Activated CD8-positive, alpha-beta T cell treated with anti-CD3 and anti-CD28 coated beads for 36 hours (primary cell): ENCODE measurements at regions of chr20 and their contacts with region 1.

Region 1: GRCh38 chr20:53611449-53611894 is 17.8 kb upstream of the ZNF217 start:
- DNase-seq: no peak
- ATAC-seq: no peak
- H3K4me3 Mint-ChIP-seq: no peak overlapping the region
- H3K27ac Mint-ChIP-seq: peak overlapping the region; percentile 7
- H3K4me1 Mint-ChIP-seq: peaks cover 32% of the 10 kb centered on the region
- H3K27me3 Mint-ChIP-seq: no peaks in the 10 kb centered on the region
- CTCF ChIP-seq: no peak

Region 2: DNA sequence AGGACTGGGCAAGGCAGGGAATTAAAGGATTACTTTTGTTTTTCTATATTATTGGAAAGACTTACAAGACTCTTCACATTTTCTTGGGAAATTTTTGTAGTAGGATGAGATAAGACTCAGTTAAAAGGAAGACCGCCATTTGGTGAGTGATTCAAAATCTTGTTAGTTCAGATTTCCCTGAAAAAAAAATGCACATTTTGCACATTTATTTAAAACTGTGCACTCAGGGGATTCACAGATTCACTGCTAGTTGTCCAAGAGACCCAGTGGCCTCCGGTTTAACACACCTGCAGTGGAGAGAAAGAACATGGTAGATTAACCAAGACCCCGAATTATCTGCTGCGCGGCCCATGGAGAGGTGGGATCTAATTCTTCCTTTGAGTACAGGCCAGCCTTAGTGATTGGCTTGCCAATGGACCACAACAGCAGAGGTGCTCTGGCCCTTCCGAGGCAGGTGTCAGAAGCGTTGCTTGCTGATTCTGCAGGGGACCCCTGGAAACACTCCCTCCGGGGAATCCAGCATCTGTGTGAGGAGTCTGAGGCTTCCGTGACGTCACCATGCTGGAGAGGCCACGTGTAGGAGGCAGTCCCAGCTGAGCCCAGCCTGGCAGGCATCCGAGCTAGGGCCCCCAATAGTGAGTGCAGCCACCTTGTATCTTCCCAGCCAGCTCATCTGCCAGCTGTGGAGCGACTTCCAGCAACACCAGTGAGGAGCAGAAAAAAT is 86.7 kb before region 1 on chr20:
- CTCF ChIA-PET with region 1: no interaction called
- POLR2A ChIA-PET with region 1: no interaction called
- intact Hi-C with region 1: no loop called
- DNase-seq: no peak
- ATAC-seq: no peak
- H3K4me3 Mint-ChIP-seq: no peak overlapping the region
- H3K27ac Mint-ChIP-seq: no peak overlapping the region
- H3K4me1 Mint-ChIP-seq: no peaks in the 10 kb centered on the region
- H3K27me3 Mint-ChIP-seq: no peaks in the 10 kb centered on the region
- CTCF ChIP-seq: no peak

Region 3: GRCh38 chr20:53594068-53595017 is 17.1 kb before region 1 on chr20:
- CTCF ChIA-PET with region 1: interaction called, 10 read pairs
- POLR2A ChIA-PET with region 1: interaction called, 15 read pairs
- intact Hi-C with region 1: no loop called
- DNase-seq: peak; percentile 97
- ATAC-seq: peak; percentile 73
- H3K4me3 Mint-ChIP-seq: peak overlapping the region; percentile 84
- H3K27ac Mint-ChIP-seq: peak overlapping the region; percentile 94
- H3K4me1 Mint-ChIP-seq: peaks cover 44% of the 10 kb centered on the region
- H3K27me3 Mint-ChIP-seq: no peaks in the 10 kb centered on the region
- CTCF ChIP-seq: no peak

Region 4: GRCh38 chr20:53623454-53624211 is 12.2 kb after region 1 on chr20:
- CTCF ChIA-PET with region 1: interaction called, 11 read pairs
- POLR2A ChIA-PET with region 1: interaction called, 29 read pairs
- intact Hi-C with region 1: no loop called
- DNase-seq: peak; percentile 63
- ATAC-seq: peak; percentile 65
- H3K4me3 Mint-ChIP-seq: peak overlapping the region; percentile 62
- H3K27ac Mint-ChIP-seq: peak overlapping the region; percentile 95
- H3K4me1 Mint-ChIP-seq: peaks cover 46% of the 10 kb centered on the region
- H3K27me3 Mint-ChIP-seq: no peaks in the 10 kb centered on the region
- CTCF ChIP-seq: no peak

Region 5: GRCh38 chr20:53905019-53905847 is 293.8 kb after region 1 on chr20:
- CTCF ChIA-PET with region 1: no interaction called
- POLR2A ChIA-PET with region 1: no interaction called
- intact Hi-C with region 1: no loop called
- DNase-seq: no peak
- ATAC-seq: no peak
- H3K4me3 Mint-ChIP-seq: no peak overlapping the region
- H3K27ac Mint-ChIP-seq: no peak overlapping the region
- H3K4me1 Mint-ChIP-seq: peaks cover 50% of the 10 kb centered on the region
- H3K27me3 Mint-ChIP-seq: no peaks in the 10 kb centered on the region
- CTCF ChIP-seq: no peak